Activated CD8-positive, alpha-beta T cell treated with anti-CD3 and anti-CD28 coated beads, Interleukin-2, amount 10 ng/mL, durations not matched to agents 7 days and 5 days (primary cell): ENCODE measurements at regions of chr10 and their contacts with region 1.

Region 1: GRCh38 chr10:97072851-97073665 is 112.7 kb downstream of the SLIT1 start:
- DNase-seq: peak; percentile 84
- ATAC-seq: peak; percentile 84
- H3K4me3 Mint-ChIP-seq: no peak overlapping the region
- H3K27ac Mint-ChIP-seq: no peak overlapping the region
- H3K4me1 Mint-ChIP-seq: peaks cover 9% of the 10 kb centered on the region
- H3K27me3 Mint-ChIP-seq: peaks cover 19% of the 10 kb centered on the region

Region 2: GRCh38 chr10:96998329-96998888 is 74.6 kb before region 1 on chr10:
- CTCF ChIA-PET with region 1: no interaction called
- POLR2A ChIA-PET with region 1: no interaction called
- DNase-seq: no peak
- ATAC-seq: no peak
- H3K4me3 Mint-ChIP-seq: no peak overlapping the region
- H3K27ac Mint-ChIP-seq: no peak overlapping the region
- H3K4me1 Mint-ChIP-seq: no peaks in the 10 kb centered on the region
- H3K27me3 Mint-ChIP-seq: no peaks in the 10 kb centered on the region

Region 3: DNA sequence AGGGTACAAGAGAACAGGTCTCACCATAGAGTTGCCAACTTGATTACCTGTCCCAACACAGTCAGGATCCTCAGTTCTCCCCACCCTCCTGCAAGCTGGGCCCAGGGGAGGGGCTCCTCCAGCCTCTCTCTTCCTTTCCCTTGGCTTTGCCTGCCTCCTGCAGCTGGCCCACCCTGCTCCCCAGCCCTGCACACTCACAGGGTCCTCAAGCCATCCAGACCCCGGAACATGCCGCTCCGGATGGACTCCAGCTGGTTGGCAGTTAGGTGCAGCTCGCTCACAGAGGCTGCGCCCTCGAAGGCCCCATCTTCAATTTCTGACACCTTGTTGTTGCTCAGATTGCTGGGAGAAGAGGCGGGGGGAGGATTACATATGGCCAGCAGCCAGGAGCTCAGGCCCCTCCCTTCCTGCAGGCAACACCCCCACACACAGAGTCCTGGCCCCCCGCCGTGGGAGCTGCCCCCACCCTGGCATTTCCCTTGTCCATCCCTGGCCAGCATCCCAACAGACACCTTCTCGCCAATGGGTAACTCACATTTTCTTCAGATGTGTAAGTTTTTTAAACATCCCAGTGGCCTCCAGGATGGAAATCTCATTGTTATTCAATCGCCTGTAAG is 26.5 kb before region 1 on chr10:
- CTCF ChIA-PET with region 1: no interaction called
- POLR2A ChIA-PET with region 1: no interaction called
- DNase-seq: no peak
- ATAC-seq: no peak
- H3K4me3 Mint-ChIP-seq: no peak overlapping the region
- H3K27ac Mint-ChIP-seq: no peak overlapping the region
- H3K4me1 Mint-ChIP-seq: no peaks in the 10 kb centered on the region
- H3K27me3 Mint-ChIP-seq: peaks cover 3% of the 10 kb centered on the region

Region 4: GRCh38 chr10:97117372-97117771 is 44.3 kb after region 1 on chr10:
- CTCF ChIA-PET with region 1: interaction called, 16 read pairs
- POLR2A ChIA-PET with region 1: no interaction called
- DNase-seq: no peak
- ATAC-seq: no peak
- H3K4me3 Mint-ChIP-seq: no peak overlapping the region
- H3K27ac Mint-ChIP-seq: no peak overlapping the region
- H3K4me1 Mint-ChIP-seq: no peaks in the 10 kb centered on the region
- H3K27me3 Mint-ChIP-seq: peaks cover 6% of the 10 kb centered on the region

Region 5: DNA sequence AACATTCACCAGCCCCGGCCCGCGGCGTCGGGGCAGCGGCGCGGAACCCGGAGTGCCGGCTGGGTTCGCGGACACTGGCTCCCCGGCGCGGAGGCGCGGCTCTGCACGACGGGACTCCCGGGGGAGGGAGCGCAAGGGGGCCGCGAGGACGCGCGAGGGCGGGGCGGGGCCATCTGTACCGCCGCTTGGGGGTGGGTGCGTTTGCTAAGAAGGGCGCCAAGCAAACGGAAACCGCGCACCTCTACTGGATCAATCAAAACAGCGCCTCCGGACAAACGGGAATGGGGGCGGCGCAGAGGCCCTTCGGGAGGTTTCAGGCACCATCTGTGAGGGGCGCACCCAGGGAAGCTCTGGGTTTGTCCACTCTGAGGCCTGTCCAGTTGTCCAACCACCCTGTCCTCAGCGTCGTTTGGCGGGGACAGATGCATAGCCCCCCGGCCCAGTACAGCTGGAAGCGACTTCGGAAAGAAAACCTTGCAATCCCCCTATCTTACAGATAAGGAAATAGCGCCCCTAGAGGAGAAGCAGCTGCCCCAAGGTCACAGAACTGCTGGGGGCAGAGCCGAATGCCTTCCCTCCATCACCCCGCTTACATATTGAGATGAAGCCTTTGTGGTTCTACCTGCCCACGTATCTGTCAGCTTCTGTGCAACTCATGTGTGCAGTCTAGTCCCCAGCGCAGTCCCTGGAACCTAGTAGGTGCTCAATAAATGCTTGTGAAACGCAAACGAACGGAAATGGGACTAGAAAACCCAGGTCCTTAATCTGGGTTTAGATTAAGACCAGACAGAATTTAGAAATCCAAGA is 123.4 kb after region 1 on chr10:
- CTCF ChIA-PET with region 1: interaction called, 442 read pairs
- POLR2A ChIA-PET with region 1: no interaction called
- DNase-seq: peak; percentile 77
- ATAC-seq: peak; percentile 90
- H3K4me3 Mint-ChIP-seq: peak overlapping the region; percentile 72
- H3K27ac Mint-ChIP-seq: no peak overlapping the region
- H3K4me1 Mint-ChIP-seq: peaks cover 25% of the 10 kb centered on the region
- H3K27me3 Mint-ChIP-seq: peaks cover 40% of the 10 kb centered on the region

Region 6: DNA sequence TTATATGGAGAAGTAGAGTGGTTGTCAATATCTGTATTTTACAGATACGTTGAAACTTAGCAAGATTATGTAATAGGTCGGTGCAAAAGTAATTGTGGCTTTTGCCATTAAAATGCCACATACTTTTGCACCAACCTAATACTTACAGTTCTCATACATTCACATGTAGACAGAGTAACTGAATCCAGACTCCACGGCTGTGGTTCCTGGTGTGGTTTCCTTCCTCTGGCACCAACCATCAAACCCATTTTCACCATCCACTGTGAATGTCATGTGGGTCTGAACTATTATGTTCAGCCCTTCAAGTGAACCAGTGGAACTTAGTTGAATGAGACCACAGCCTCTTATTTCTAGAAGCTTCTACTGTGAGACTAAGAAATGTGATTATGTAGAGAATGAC is 144.2 kb after region 1 on chr10:
- CTCF ChIA-PET with region 1: interaction called, 442 read pairs
- POLR2A ChIA-PET with region 1: no interaction called
- DNase-seq: no peak
- ATAC-seq: no peak
- H3K4me3 Mint-ChIP-seq: no peak overlapping the region
- H3K27ac Mint-ChIP-seq: no peak overlapping the region
- H3K4me1 Mint-ChIP-seq: peaks cover 29% of the 10 kb centered on the region
- H3K27me3 Mint-ChIP-seq: no peaks in the 10 kb centered on the region

Region 7: GRCh38 chr10:97222326-97222961 is 149.4 kb after region 1 on chr10:
- CTCF ChIA-PET with region 1: interaction called, 13 read pairs
- POLR2A ChIA-PET with region 1: no interaction called
- DNase-seq: no peak
- ATAC-seq: no peak
- H3K4me3 Mint-ChIP-seq: no peak overlapping the region
- H3K27ac Mint-ChIP-seq: no peak overlapping the region
- H3K4me1 Mint-ChIP-seq: peaks cover 34% of the 10 kb centered on the region
- H3K27me3 Mint-ChIP-seq: no peaks in the 10 kb centered on the region

Region 8: DNA sequence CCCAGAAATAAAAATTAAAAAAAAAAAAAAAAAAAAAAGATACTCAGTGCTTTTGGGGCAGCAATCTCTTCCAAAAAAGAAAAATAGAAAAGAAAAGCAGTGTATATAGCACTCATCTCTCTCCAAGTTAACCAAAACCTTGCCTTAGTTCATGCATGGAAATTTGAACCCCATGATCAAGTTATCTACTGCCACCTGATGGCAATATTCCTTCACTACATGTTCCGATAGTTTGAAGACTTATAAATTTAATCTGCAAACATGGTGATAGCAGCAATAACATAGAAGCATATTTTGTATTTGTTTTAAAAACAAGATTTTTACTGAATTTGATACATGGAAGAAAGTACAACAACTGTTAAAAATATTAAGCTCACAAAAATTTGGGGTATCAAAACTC is 161.3 kb after region 1 on chr10:
- CTCF ChIA-PET with region 1: interaction called, 26 read pairs
- POLR2A ChIA-PET with region 1: no interaction called
- DNase-seq: no peak
- ATAC-seq: peak; percentile 33
- H3K4me3 Mint-ChIP-seq: no peak overlapping the region
- H3K27ac Mint-ChIP-seq: no peak overlapping the region
- H3K4me1 Mint-ChIP-seq: peaks cover 3% of the 10 kb centered on the region
- H3K27me3 Mint-ChIP-seq: no peaks in the 10 kb centered on the region